Activated naive CD4-positive, alpha-beta T cell treated with anti-CD3 and anti-CD28 coated beads for 36 hours (primary cell): ENCODE measurements at regions of chr20 and their contacts with region 1.

Region 1: GRCh38 chr20:43187476-43188233 is 2.1 kb downstream of the PTPRT start:
- DNase-seq: peak; percentile 86
- H3K4me3 Mint-ChIP-seq: no peak overlapping the region
- H3K27ac Mint-ChIP-seq: no peak overlapping the region
- H3K4me1 Mint-ChIP-seq: peaks cover 8% of the 10 kb centered on the region
- H3K27me3 Mint-ChIP-seq: peaks cover 43% of the 10 kb centered on the region

Region 2: GRCh38 chr20:41955999-41956705 is 1231.5 kb before region 1 on chr20:
- CTCF ChIA-PET with region 1: no interaction called
- intact Hi-C with region 1: loop called (anchors 5 kb)
- DNase-seq: no peak
- H3K4me3 Mint-ChIP-seq: no peak overlapping the region
- H3K27ac Mint-ChIP-seq: no peak overlapping the region
- H3K4me1 Mint-ChIP-seq: no peaks in the 10 kb centered on the region
- H3K27me3 Mint-ChIP-seq: peaks cover 2% of the 10 kb centered on the region

Region 3: GRCh38 chr20:43243672-43244269 is 56.1 kb after region 1 on chr20:
- CTCF ChIA-PET with region 1: no interaction called
- intact Hi-C with region 1: no loop called
- DNase-seq: no peak
- H3K4me3 Mint-ChIP-seq: no peak overlapping the region
- H3K27ac Mint-ChIP-seq: no peak overlapping the region
- H3K4me1 Mint-ChIP-seq: no peaks in the 10 kb centered on the region
- H3K27me3 Mint-ChIP-seq: peaks cover 10% of the 10 kb centered on the region

Region 4: GRCh38 chr20:43263226-43263625 is 75.6 kb after region 1 on chr20:
- CTCF ChIA-PET with region 1: no interaction called
- intact Hi-C with region 1: no loop called
- DNase-seq: no peak
- H3K4me3 Mint-ChIP-seq: no peak overlapping the region
- H3K27ac Mint-ChIP-seq: no peak overlapping the region
- H3K4me1 Mint-ChIP-seq: no peaks in the 10 kb centered on the region
- H3K27me3 Mint-ChIP-seq: peaks cover 8% of the 10 kb centered on the region

Region 5: GRCh38 chr20:43408848-43409576 is 221.4 kb after region 1 on chr20:
- CTCF ChIA-PET with region 1: no interaction called
- intact Hi-C with region 1: loop called (anchors 2 kb)
- DNase-seq: peak; percentile 35
- H3K4me3 Mint-ChIP-seq: no peak overlapping the region
- H3K27ac Mint-ChIP-seq: no peak overlapping the region
- H3K4me1 Mint-ChIP-seq: no peaks in the 10 kb centered on the region
- H3K27me3 Mint-ChIP-seq: peaks cover 39% of the 10 kb centered on the region